ENCODE measurements at regions of chr10 and their contacts with region 1.

Region 1: DNA sequence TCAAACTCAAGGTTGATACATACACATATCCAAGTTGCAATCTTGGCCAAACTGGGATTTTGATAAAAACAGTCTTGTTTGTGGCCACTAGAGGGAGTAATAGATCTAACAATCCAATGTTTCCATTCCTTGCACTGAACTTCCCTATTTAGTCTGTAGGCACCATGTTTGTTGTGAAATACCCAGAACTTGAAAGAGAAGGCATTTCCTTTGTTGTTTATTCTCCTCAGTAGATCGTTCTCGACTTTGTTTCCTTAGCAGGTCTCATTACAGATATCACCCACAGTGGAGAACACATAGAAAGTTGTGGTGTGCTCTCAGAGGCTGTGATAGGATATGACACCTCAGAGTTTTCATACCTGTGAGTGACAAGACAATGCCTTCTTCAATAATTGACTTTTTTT is 70.3 kb upstream of the MXI1 start:
- DNase-seq: peak; percentile 81
- H3K4me3 ChIP-seq: no peak overlapping the region
- H3K27ac ChIP-seq: no peak overlapping the region
- H3K4me1 ChIP-seq: peaks cover 4% of the 10 kb centered on the region
- H3K27me3 ChIP-seq: no peaks in the 10 kb centered on the region
- CTCF ChIP-seq: peak; percentile 77

Region 2: GRCh38 chr10:109769966-109770365 is 367.2 kb before region 1 on chr10:
- CTCF ChIA-PET with region 1: no interaction called
- POLR2A ChIA-PET with region 1: no interaction called
- intact Hi-C with region 1: no loop called
- DNase-seq: no peak
- H3K4me3 ChIP-seq: no peak overlapping the region
- H3K27ac ChIP-seq: peak overlapping the region; percentile 38
- H3K4me1 ChIP-seq: peaks cover 17% of the 10 kb centered on the region
- H3K27me3 ChIP-seq: no peaks in the 10 kb centered on the region
- CTCF ChIP-seq: no peak

Region 3: GRCh38 chr10:109883859-109884771 is 253.0 kb before region 1 on chr10:
- CTCF ChIA-PET with region 1: interaction called, 5 read pairs
- POLR2A ChIA-PET with region 1: no interaction called
- intact Hi-C with region 1: loop called (anchors 2 kb)
- DNase-seq: peak; percentile 89
- H3K4me3 ChIP-seq: no peak overlapping the region
- H3K27ac ChIP-seq: no peak overlapping the region
- H3K4me1 ChIP-seq: peaks cover 4% of the 10 kb centered on the region
- H3K27me3 ChIP-seq: no peaks in the 10 kb centered on the region
- CTCF ChIP-seq: peak; percentile 95

Region 4: GRCh38 chr10:110036640-110037039 is 100.5 kb before region 1 on chr10:
- CTCF ChIA-PET with region 1: no interaction called
- POLR2A ChIA-PET with region 1: no interaction called
- intact Hi-C with region 1: no loop called
- DNase-seq: no peak
- H3K4me3 ChIP-seq: no peak overlapping the region
- H3K27ac ChIP-seq: no peak overlapping the region
- H3K4me1 ChIP-seq: peaks cover 24% of the 10 kb centered on the region
- H3K27me3 ChIP-seq: no peaks in the 10 kb centered on the region
- CTCF ChIP-seq: no peak

Region 5: GRCh38 chr10:110225756-110226542 is 88.8 kb after region 1 on chr10:
- CTCF ChIA-PET with region 1: interaction called, 3 read pairs
- POLR2A ChIA-PET with region 1: no interaction called
- intact Hi-C with region 1: loop called (anchors 2 kb)
- DNase-seq: peak; percentile 97
- H3K4me3 ChIP-seq: peak overlapping the region; percentile 73
- H3K27ac ChIP-seq: peak overlapping the region; percentile 70
- H3K4me1 ChIP-seq: peaks cover 20% of the 10 kb centered on the region
- H3K27me3 ChIP-seq: no peaks in the 10 kb centered on the region
- CTCF ChIP-seq: peak; percentile 55